Head of caudate nucleus (tissue), 42 donors: ENCODE measurements at regions of chr1 and their contacts with region 1.

Region 1: DNA sequence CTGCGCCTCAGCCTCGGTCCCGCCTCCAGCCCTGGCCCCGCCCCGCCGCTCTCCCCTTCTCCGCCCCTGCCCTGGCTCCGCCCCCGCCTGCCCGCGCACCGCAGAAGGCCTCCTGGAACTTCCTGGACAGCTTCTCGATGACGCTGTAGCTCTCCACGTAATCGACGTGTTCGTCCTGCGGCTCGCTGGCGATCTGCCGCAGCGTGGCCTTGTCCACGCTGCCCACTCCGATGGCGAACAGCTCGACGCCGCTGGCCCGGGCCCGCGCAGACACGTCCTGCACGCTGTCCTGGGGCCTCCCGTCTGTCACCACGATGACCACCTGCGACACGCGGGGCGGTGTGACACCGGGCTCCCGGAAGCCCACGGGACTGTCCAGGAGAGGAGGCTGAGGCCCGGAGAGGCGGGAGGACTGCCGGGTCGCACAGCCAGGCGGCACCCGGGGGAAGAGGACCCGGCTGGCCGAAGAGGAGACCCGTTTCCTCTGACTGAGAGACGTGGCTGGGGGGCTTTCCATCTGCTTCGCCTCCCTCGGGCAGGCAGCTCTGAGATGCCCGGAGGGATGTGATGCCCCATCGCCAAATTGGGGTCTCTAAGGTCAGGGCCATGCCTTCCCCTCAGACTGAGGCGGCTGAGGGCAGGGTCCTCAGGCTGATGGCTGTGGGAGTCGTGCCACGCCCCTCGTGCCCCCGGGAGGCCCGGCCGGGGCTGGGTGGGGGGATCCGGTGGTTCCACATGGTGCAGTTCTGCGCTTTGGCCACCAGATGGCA is 4.6 kb downstream of the MATN1 start:
- DNase-seq: peak in 36 of 42 donors; percentile 53 to 95 (median 90)

Region 2: GRCh38 chr1:29230553-29231378 is 1488.1 kb before region 1 on chr1 and contains the start of gene MECR:
- intact Hi-C with region 1: loop called (anchors 5 kb)
- DNase-seq: peak; percentile 89 to 98 (median 95)

Region 3: DNA sequence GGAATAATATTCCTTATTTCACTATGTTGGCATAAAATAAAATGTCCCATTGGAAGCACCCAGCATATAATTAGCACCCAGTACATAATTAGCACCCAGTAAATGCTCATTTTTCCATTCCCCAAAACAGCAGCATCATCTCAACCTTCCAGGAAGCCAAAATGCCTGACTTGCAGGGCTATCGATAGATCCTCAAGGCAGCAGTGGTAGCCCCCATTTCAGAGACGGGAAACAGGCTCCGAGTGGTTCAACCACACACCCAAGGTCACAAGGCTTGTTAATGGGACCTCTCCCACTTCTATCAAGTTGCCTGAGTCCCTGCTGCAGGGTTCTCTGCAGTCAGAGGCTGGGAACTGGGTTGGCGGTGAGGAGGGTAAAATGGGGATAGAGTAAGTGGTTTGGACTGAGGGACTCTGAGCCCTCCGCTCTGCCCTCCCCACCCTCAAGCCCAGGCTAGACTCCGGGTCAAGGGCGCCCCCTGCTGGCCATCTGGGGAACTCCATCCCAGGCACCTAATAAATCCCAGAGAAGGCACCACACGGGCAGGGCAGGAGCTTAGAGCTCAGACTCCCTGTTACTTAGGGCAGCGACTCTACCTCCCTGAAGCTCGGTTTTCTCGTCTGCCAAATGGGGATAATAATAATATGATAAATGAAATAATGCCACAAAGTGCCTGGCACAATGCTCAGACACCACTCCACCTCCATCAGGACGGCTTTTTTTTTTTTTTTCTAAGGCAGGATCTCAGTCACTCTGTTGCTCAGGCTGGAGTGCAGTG is 60.7 kb after region 1 on chr1:
- intact Hi-C with region 1: loop called (anchors 1 kb)
- DNase-seq: peak; percentile 63 to 97 (median 91)